Endothelial cell of umbilical vein (primary cell): ENCODE measurements at regions of chrX and their contacts with region 1.

Region 1: GRCh38 chrX:15988661-15989603 is 134.3 kb upstream of the AP1S2 start:
- DNase-seq: peak; percentile 74
- H3K4me3 ChIP-seq: no peak overlapping the region
- H3K27ac ChIP-seq: peak overlapping the region; percentile 75
- H3K4me1 ChIP-seq: peaks cover 17% of the 10 kb centered on the region
- H3K27me3 ChIP-seq: no peaks in the 10 kb centered on the region
- CTCF ChIP-seq: no peak
- POLR2A ChIP-seq: peak; percentile 15

Region 2: DNA sequence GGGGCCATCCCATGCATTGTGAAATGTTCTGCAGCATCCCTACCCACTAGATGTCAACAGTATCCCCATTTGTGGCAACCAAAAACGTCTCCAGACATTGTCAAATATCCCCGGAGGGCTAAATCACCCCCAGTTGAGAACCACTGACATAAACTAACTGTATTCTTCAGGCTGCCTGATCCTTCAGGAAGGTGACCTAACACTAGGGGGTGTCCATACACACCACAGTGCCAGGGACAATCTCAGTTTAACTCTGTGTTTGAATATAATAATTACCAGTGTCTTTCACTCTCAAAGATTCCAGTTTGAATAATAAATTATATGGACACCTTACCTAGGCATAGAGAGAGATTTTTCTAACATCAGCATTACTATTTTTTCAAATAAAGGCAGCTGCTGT is 394.6 kb before region 1 on chrX:
- CTCF ChIA-PET with region 1: no interaction called
- POLR2A ChIA-PET with region 1: no interaction called
- dilution Hi-C with region 1: no loop called
- intact Hi-C with region 1: no loop called
- DNase-seq: no peak
- H3K4me3 ChIP-seq: no peak overlapping the region
- H3K27ac ChIP-seq: no peak overlapping the region
- H3K4me1 ChIP-seq: no peaks in the 10 kb centered on the region
- H3K27me3 ChIP-seq: peaks cover 3 to 4% of the 10 kb centered on the region in 2 experiments
- CTCF ChIP-seq: no peak
- POLR2A ChIP-seq: no peak

Region 3: GRCh38 chrX:16002185-16002584 is 13.3 kb after region 1 on chrX:
- CTCF ChIA-PET with region 1: no interaction called
- POLR2A ChIA-PET with region 1: no interaction called
- dilution Hi-C with region 1: no loop called
- intact Hi-C with region 1: loop called (anchors 2 kb)
- DNase-seq: peak; percentile 50
- H3K4me3 ChIP-seq: no peak overlapping the region
- H3K27ac ChIP-seq: peak overlapping the region; percentile 35
- H3K4me1 ChIP-seq: peaks cover 12% of the 10 kb centered on the region
- H3K27me3 ChIP-seq: no peaks in the 10 kb centered on the region
- CTCF ChIP-seq: no peak
- POLR2A ChIP-seq: no peak

Region 4: GRCh38 chrX:16023790-16024734 is 35.1 kb after region 1 on chrX:
- CTCF ChIA-PET with region 1: no interaction called
- POLR2A ChIA-PET with region 1: no interaction called
- dilution Hi-C with region 1: no loop called
- intact Hi-C with region 1: loop called (anchors 2 kb)
- DNase-seq: no peak
- H3K4me3 ChIP-seq: no peak overlapping the region
- H3K27ac ChIP-seq: no peak overlapping the region
- H3K4me1 ChIP-seq: peaks cover 10% of the 10 kb centered on the region
- H3K27me3 ChIP-seq: peaks cover 0 to 7% of the 10 kb centered on the region in 2 experiments
- CTCF ChIP-seq: no peak
- POLR2A ChIP-seq: no peak